Panc1 (cell line): ENCODE measurements at regions of chr3 and their contacts with region 1.

Region 1: GRCh38 chr3:194785315-194785714 is 99.6 kb downstream of the FAM43A start:
- DNase-seq: no peak
- ATAC-seq: no peak
- H3K4me3 ChIP-seq: no peak overlapping the region
- H3K27ac ChIP-seq: no peak overlapping the region
- H3K4me1 ChIP-seq: no peaks in the 10 kb centered on the region
- H3K27me3 ChIP-seq: no peaks in the 10 kb centered on the region
- CTCF ChIP-seq: no peak

Region 2: GRCh38 chr3:194706431-194707146 is 78.7 kb before region 1 on chr3:
- CTCF ChIA-PET with region 1: no interaction called
- POLR2A ChIA-PET with region 1: no interaction called
- in situ Hi-C with region 1: no loop called
- intact Hi-C with region 1: loop called (anchors 5 kb)
- DNase-seq: no peak
- ATAC-seq: peak; percentile 24; the same call in 1 of the 2 replicates
- H3K4me3 ChIP-seq: no peak overlapping the region
- H3K27ac ChIP-seq: no peak overlapping the region
- H3K4me1 ChIP-seq: no peaks in the 10 kb centered on the region
- H3K27me3 ChIP-seq: no peaks in the 10 kb centered on the region
- CTCF ChIP-seq: no peak

Region 3: GRCh38 chr3:195282961-195283360 is 497.6 kb after region 1 on chr3:
- CTCF ChIA-PET with region 1: no interaction called
- POLR2A ChIA-PET with region 1: no interaction called
- in situ Hi-C with region 1: no loop called
- intact Hi-C with region 1: no loop called
- DNase-seq: no peak
- ATAC-seq: no peak
- H3K4me3 ChIP-seq: no peak overlapping the region
- H3K27ac ChIP-seq: no peak overlapping the region
- H3K4me1 ChIP-seq: no peaks in the 10 kb centered on the region; the same call in 1 of the 2 replicates
- H3K27me3 ChIP-seq: no peaks in the 10 kb centered on the region
- CTCF ChIP-seq: no peak